MCF 10A (cell line): ENCODE measurements at regions of chr5 and their contacts with region 1.

Region 1: DNA sequence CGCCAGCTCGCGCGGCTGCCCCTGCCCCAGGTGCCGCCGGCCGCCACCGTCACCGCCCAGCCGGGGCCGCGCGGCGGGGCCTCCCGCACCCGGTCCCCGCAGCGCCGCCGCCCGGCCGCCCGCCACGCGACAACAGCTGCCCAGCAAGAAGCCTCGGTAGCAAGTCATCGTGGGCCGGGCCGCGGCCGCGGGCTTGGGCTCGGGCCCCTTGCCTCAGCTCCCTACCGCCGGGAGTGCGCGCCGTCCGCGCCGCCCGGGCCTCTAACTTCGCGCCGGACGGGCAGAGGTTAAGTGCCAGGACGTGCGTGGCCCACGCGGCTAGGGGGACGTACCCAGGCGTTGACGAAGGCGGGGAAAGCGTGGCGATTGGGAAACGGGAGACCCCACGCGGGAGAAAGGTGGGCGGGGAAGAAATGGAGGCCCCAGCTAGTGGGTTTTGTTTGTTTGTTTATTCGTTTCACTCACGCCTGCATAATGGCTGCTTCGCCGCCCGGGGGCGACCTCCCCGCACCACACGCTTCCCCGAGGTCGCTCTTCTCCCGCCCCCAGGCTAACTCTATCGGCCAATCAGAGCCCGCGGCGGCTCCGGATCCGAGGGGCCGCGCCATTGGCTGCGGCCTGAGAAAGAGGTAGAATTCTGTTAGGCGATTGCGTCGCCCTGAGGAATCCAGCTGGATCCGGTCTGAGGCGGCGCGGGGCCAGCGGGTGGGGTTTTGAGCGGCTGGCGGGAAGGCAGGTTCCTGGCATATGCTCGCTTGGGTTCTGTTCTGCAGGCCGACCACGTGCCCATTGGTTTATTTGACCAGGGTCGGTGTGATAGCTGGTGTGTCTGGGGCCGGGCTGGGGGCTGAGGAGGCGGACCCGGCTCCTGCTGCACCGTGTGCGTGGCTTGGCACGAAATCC is at the start of gene NADK2:
- DNase-seq: peak; percentile 97
- H3K4me3 Mint-ChIP-seq: peak within 1 kb of the TSS; percentile 86
- H3K27ac Mint-ChIP-seq: peak within 1 kb of the TSS; percentile 98
- H3K4me1 Mint-ChIP-seq: peaks cover 35% of the 10 kb centered on the region
- H3K27me3 Mint-ChIP-seq: no peaks in the 10 kb centered on the region
- CTCF ChIP-seq: peak; percentile 55
- total RNA-seq, gene NADK2: 36.2 and 37.1 TPM in 2 replicates

Region 2: GRCh38 chr5:36151434-36152323 is 90.2 kb before region 1 on chr5 and contains the starts of genes LMBRD2 and SKP2:
- CTCF ChIA-PET with region 1: interaction called, 3 read pairs
- POLR2A ChIA-PET with region 1: interaction called, 19 read pairs
- intact Hi-C with region 1: no loop called
- DNase-seq: peak; percentile 98
- H3K4me3 Mint-ChIP-seq: peak within 1 kb of the TSS; percentile 92
- H3K27ac Mint-ChIP-seq: peak within 1 kb of the TSS; percentile 91
- H3K4me1 Mint-ChIP-seq: peaks cover 39% of the 10 kb centered on the region
- H3K27me3 Mint-ChIP-seq: no peaks in the 10 kb centered on the region
- CTCF ChIP-seq: no peak
- total RNA-seq, gene LMBRD2: 7.9 and 9.6 TPM in 2 replicates
- total RNA-seq, gene SKP2: 19.3 and 21.7 TPM in 2 replicates

Region 3: GRCh38 chr5:36177715-36178523 is 64.0 kb before region 1 on chr5:
- CTCF ChIA-PET with region 1: interaction called, 5 read pairs
- POLR2A ChIA-PET with region 1: interaction called, 9 read pairs
- intact Hi-C with region 1: loop called (anchors 5 kb)
- DNase-seq: peak; percentile 49
- H3K4me3 Mint-ChIP-seq: no peak overlapping the region
- H3K27ac Mint-ChIP-seq: no peak overlapping the region
- H3K4me1 Mint-ChIP-seq: no peaks in the 10 kb centered on the region
- H3K27me3 Mint-ChIP-seq: no peaks in the 10 kb centered on the region
- CTCF ChIP-seq: peak; percentile 49

Region 4: GRCh38 chr5:36217567-36217966 is 24.3 kb before region 1 on chr5:
- CTCF ChIA-PET with region 1: interaction called, 7 read pairs
- POLR2A ChIA-PET with region 1: interaction called, 17 read pairs
- intact Hi-C with region 1: no loop called
- DNase-seq: no peak
- H3K4me3 Mint-ChIP-seq: no peak overlapping the region
- H3K27ac Mint-ChIP-seq: no peak overlapping the region
- H3K4me1 Mint-ChIP-seq: no peaks in the 10 kb centered on the region
- H3K27me3 Mint-ChIP-seq: no peaks in the 10 kb centered on the region
- CTCF ChIP-seq: no peak

Region 5: DNA sequence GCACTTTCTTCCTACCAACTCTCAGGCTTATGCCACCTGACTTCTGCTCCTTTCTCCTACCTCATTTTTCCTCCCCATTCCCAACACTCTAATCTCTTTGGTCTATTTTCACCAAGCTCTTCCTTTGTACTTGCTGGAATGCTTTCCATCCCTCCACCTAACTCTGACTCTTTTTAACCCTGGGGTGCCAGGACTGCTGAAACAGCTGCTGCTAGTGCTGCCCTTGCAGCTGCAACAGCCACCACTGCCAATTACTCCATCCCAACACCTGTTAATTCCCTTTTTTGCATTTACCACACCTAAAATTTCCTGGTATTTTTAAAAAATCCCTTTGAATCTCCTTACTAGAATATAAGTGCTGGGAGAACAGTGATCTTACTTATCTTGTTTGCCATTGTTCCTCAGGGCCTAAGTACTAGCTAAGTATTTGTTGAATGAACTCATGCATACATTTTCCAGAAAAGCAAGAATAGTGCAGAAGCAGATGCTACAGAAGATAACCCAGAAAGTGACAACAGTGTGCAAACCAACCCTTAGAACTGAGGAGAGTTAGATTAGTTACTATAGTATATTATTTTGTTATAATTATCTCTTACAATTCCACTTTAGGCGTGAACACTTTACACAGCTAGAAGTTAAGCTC is 11.6 kb before region 1 on chr5:
- CTCF ChIA-PET with region 1: interaction called, 3 read pairs
- POLR2A ChIA-PET with region 1: interaction called, 13 read pairs
- intact Hi-C with region 1: no loop called
- DNase-seq: no peak
- H3K4me3 Mint-ChIP-seq: no peak overlapping the region
- H3K27ac Mint-ChIP-seq: no peak overlapping the region
- H3K4me1 Mint-ChIP-seq: peaks cover 22% of the 10 kb centered on the region
- H3K27me3 Mint-ChIP-seq: no peaks in the 10 kb centered on the region
- CTCF ChIP-seq: no peak

Region 6: GRCh38 chr5:36305571-36306326 is 63.9 kb after region 1 on chr5:
- CTCF ChIA-PET with region 1: interaction called, 4 read pairs
- POLR2A ChIA-PET with region 1: interaction called, 3 read pairs
- intact Hi-C with region 1: loop called (anchors 1 kb)
- DNase-seq: peak; percentile 65
- H3K4me3 Mint-ChIP-seq: no peak overlapping the region
- H3K27ac Mint-ChIP-seq: peak overlapping the region; percentile 47
- H3K4me1 Mint-ChIP-seq: peaks cover 11% of the 10 kb centered on the region
- H3K27me3 Mint-ChIP-seq: peaks cover 27% of the 10 kb centered on the region
- CTCF ChIP-seq: peak; percentile 49

Region 7: DNA sequence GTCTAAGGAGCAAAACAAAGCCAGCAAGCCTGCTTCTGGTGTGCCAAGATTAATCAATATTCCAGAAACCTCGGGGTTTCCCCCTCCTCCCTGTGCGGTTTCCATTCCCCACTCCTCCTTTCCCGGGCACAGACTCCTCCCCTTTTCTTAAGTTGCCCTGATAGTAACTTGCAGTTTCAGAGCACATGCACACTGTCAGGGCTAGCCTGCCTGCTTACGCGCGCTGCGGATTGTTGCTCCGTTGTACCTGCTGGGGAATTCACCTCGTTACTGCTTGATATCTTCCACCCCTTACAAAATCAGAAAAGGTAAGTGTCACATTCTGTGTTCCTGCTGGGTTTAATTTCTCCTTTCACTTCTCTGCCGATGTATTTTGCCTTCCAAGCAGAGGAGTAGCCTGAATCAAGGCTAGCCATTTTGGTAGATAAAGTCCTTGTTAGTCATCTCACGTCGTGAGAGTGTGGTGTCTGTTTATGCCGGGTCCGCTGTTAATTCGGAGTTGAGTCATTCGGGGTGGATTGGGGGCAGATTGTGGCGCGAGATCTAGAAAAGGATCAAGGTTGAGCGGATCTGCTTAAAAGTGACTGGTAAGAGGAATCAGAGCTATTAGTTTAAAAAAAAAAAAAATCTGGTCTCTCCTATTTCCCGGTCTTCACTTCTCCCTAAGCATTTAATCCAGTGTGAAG is 364.7 kb after region 1 on chr5 and contains the start of gene SLC1A3:
- CTCF ChIA-PET with region 1: no interaction called
- POLR2A ChIA-PET with region 1: interaction called, 11 read pairs
- intact Hi-C with region 1: no loop called
- DNase-seq: peak; percentile 84
- H3K4me3 Mint-ChIP-seq: peak within 1 kb of the TSS; percentile 88
- H3K27ac Mint-ChIP-seq: peak within 1 kb of the TSS; percentile 84
- H3K4me1 Mint-ChIP-seq: peaks cover 9% of the 10 kb centered on the region
- H3K27me3 Mint-ChIP-seq: no peaks in the 10 kb centered on the region
- CTCF ChIP-seq: no peak
- total RNA-seq, gene SLC1A3: 5.9 and 9.6 TPM in 2 replicates